ENCODE measurements at regions of chr20 and their contacts with region 1.

Region 1: GRCh38 chr20:57450419-57450818 is 59.2 kb downstream of the RBM38 start:
- DNase-seq: peak; percentile 92
- H3K4me3 ChIP-seq: peak overlapping the region; percentile 64
- H3K27ac ChIP-seq: peak overlapping the region; percentile 84
- H3K4me1 ChIP-seq: peaks cover 65% of the 10 kb centered on the region
- CTCF ChIP-seq: no peak

Region 2: DNA sequence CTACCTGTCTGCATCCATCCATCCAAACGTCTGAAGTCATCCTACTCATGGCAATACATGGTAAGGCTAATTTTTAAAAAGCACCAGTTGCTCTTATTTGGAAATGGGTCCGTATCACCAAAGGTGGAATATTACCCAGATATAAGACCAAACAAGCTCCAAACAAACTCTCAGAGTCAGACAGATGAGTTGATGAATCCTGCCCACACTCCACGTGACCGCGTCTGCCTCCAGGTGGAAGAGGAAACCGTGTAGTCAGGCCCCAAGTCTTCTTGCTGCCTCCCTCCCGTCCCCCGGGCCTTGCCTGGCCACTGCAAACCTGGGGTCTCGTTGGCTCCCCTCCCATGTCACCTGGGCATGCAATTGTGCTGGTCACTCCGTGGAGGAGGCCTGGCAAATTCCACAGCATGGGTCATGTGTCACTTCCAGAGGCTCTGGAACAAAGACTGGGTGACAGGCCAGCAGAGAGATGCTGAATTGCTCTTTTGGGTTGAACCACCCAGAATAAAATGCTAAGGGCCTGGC is 42.7 kb after region 1 on chr20:
- CTCF ChIA-PET with region 1: no interaction called
- POLR2A ChIA-PET with region 1: no interaction called
- intact Hi-C with region 1: loop called (anchors 1 kb)
- DNase-seq: peak; percentile 62
- H3K4me3 ChIP-seq: peak overlapping the region; percentile 67
- H3K27ac ChIP-seq: peak overlapping the region; percentile 82
- H3K4me1 ChIP-seq: peaks cover 63% of the 10 kb centered on the region
- CTCF ChIP-seq: no peak

Region 3: DNA sequence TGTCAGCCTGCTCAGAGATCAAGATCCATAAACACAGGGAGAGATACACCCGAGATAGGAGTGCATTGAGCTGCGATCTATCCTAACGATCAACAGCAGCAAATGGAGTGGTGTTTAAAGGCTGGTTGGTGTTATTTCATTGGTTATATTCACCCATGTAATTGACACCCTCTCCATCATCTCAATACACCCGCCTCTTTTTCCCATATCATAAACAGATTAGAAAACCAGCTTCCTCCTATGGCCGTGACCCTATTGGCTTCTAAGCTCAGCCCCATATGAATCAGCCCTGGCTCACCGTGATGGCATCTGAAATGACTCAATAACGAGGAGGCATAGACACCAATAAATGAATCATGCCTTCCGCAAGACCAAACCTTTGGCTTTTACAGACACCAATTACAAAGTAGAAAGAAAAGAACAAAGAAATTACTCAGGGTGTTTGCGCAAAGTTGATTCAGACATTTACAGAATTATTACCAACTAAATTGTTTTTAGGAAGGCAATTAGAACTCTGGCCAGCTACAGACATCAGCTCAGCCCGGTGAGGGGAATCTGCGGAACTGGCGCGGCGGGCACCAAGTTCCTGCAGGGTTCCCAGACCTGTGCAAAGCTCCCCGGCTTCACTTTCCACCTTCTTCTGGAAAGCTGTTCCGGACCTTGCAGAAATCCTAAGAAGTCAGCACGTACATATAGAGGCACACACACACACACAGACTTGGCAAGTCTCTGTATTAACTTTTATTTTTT is 247.9 kb after region 1 on chr20:
- CTCF ChIA-PET with region 1: no interaction called
- POLR2A ChIA-PET with region 1: no interaction called
- intact Hi-C with region 1: no loop called
- DNase-seq: no peak
- H3K4me3 ChIP-seq: no peak overlapping the region
- H3K27ac ChIP-seq: no peak overlapping the region
- H3K4me1 ChIP-seq: peaks cover 67% of the 10 kb centered on the region
- CTCF ChIP-seq: no peak

Region 4: DNA sequence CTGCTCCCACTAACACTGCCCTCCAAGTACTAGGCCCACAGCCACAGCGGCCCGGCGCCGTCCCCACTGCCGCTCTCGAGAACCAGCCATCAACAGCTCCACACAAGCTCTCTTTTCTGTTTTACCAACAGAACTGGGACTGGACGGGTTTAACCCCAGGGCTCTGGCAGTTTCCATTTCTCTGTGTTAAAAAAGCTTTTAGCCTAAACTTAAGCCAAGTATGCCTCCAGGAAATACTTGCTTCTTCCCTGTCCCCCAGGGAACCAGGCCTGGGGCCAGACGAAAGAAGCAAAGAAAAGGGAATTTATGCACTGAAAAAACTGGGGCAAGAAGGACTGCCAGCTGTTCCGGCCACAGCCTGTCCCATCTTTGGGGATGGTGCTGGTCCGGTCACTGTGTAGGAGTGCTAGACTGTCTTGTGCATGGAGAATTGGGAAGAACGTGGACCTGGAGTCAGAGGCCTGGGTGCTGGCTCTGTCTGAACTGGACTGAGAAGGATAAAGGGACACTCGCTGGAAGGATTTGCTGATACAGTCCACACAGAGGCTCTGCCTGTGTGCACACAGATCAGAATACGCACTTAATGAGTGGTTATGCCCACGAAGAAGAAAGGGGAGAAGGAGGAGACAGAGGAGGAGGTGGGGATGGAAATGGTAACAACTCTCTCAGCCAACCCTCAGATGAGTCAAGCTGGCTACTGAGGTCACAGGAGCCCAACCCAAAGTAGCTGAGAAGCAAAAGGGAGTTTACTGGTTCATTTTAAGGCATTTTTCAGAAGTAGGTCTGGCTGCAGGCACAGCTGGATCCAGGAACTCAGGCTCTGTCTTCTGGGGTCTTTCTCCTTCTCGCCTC is 513.8 kb after region 1 on chr20:
- CTCF ChIA-PET with region 1: no interaction called
- POLR2A ChIA-PET with region 1: no interaction called
- intact Hi-C with region 1: no loop called
- DNase-seq: no peak
- H3K4me3 ChIP-seq: no peak overlapping the region
- H3K27ac ChIP-seq: no peak overlapping the region
- H3K4me1 ChIP-seq: no peaks in the 10 kb centered on the region
- CTCF ChIP-seq: no peak